Caco-2 (cell line): ENCODE measurements at regions of chr12 and their contacts with region 1.

Region 1: GRCh38 chr12:85468356-85469157 is 188.5 kb downstream of the ALX1 start:
- DNase-seq: peak; percentile 48 to 55
- H3K4me3 ChIP-seq: peak overlapping the region; percentile 11
- H3K4me3 Mint-ChIP-seq: peak overlapping the region; percentile 76
- H3K27ac Mint-ChIP-seq: peak overlapping the region; percentile 36
- H3K4me1 ChIP-seq: peaks cover 14% of the 10 kb centered on the region
- H3K4me1 Mint-ChIP-seq: peaks cover 19% of the 10 kb centered on the region
- H3K27me3 ChIP-seq: no peaks in the 10 kb centered on the region
- H3K27me3 Mint-ChIP-seq: no peaks in the 10 kb centered on the region
- CTCF ChIP-seq: peak; percentile 73 to 80

Region 2: GRCh38 chr12:85424581-85425348 is 43.8 kb before region 1 on chr12:
- CTCF ChIA-PET with region 1: interaction called, 6 read pairs
- POLR2A ChIA-PET with region 1: no interaction called
- intact Hi-C with region 1: loop called (anchors 1 kb)
- DNase-seq: peak; percentile 46 to 52
- H3K4me3 ChIP-seq: no peak overlapping the region
- H3K4me3 Mint-ChIP-seq: no peak overlapping the region
- H3K27ac Mint-ChIP-seq: no peak overlapping the region
- H3K4me1 ChIP-seq: peaks cover 29% of the 10 kb centered on the region
- H3K4me1 Mint-ChIP-seq: peaks cover 17% of the 10 kb centered on the region
- H3K27me3 ChIP-seq: no peaks in the 10 kb centered on the region
- H3K27me3 Mint-ChIP-seq: no peaks in the 10 kb centered on the region
- CTCF ChIP-seq: peak; percentile 59 to 72

Region 3: GRCh38 chr12:85642810-85643209 is 174.3 kb after region 1 on chr12:
- CTCF ChIA-PET with region 1: interaction called, 8 read pairs
- POLR2A ChIA-PET with region 1: no interaction called
- intact Hi-C with region 1: loop called (anchors 1 kb)
- DNase-seq: peak; percentile 47 to 68
- H3K4me3 ChIP-seq: no peak overlapping the region
- H3K4me3 Mint-ChIP-seq: no peak overlapping the region
- H3K27ac Mint-ChIP-seq: no peak overlapping the region
- H3K4me1 ChIP-seq: no peaks in the 10 kb centered on the region
- H3K4me1 Mint-ChIP-seq: no peaks in the 10 kb centered on the region
- H3K27me3 ChIP-seq: no peaks in the 10 kb centered on the region
- H3K27me3 Mint-ChIP-seq: no peaks in the 10 kb centered on the region
- CTCF ChIP-seq: peak; percentile 55 to 70

Region 4: DNA sequence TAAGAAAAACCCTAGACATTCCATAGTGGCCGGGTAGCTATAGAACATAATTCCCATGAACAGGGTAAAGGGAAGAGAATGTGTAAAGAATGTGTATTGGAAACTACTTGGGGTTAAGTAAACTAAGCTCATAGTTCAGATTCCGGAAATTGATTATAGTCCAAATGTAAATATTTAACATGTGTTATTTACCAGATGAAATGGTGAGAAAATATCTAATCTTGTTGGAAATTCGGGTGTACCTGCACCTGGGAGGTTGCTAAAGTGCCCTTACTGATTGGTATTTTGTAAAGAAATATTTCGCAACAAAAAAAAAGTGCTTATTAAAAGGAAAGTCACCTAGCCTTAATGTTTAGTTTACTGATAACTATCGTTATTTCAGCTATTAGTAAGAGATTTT is 353.2 kb after region 1 on chr12:
- CTCF ChIA-PET with region 1: no interaction called
- POLR2A ChIA-PET with region 1: no interaction called
- intact Hi-C with region 1: loop called (anchors 1 kb)
- DNase-seq: peak; percentile 45 to 64
- H3K4me3 ChIP-seq: no peak overlapping the region
- H3K4me3 Mint-ChIP-seq: no peak overlapping the region
- H3K27ac Mint-ChIP-seq: no peak overlapping the region
- H3K4me1 ChIP-seq: peaks cover 20% of the 10 kb centered on the region
- H3K4me1 Mint-ChIP-seq: peaks cover 7% of the 10 kb centered on the region
- H3K27me3 ChIP-seq: no peaks in the 10 kb centered on the region; the same call in 1 of the 2 replicates
- H3K27me3 Mint-ChIP-seq: peaks cover 9% of the 10 kb centered on the region
- CTCF ChIP-seq: no peak

Region 5: DNA sequence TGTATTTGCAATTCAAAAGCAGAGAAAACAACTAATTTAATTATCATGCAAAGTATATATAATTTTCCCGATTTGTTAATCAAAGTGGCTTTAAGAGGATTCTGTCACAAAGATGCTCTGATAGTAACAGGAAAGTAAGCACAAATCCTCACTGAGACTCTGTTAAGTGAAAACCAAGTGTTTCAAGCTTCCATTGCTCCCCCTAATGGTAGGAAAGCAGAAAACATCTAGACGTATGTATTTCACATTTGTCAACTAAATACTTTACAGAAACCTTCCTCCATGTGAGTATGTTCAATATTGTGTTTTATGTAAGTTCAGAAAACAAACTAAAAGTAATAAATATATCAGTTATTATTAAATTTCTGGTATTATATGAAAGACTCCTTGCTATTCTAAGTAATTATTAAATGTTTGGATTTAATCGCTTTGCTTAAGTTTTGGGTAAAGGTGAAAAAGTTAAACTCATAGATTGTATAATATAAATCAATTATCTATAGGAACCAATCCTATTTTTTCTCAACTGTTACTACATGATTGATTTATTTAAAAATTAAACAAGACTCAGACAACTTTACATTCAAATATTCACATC is 404.0 kb after region 1 on chr12:
- CTCF ChIA-PET with region 1: interaction called, 4 read pairs
- POLR2A ChIA-PET with region 1: no interaction called
- intact Hi-C with region 1: loop called (anchors 1 kb)
- DNase-seq: peak in 1 of 2 experiments; percentile 35
- H3K4me3 ChIP-seq: no peak overlapping the region
- H3K4me3 Mint-ChIP-seq: no peak overlapping the region
- H3K27ac Mint-ChIP-seq: no peak overlapping the region
- H3K4me1 ChIP-seq: no peaks in the 10 kb centered on the region
- H3K4me1 Mint-ChIP-seq: no peaks in the 10 kb centered on the region
- H3K27me3 ChIP-seq: no peaks in the 10 kb centered on the region
- H3K27me3 Mint-ChIP-seq: peaks cover 6% of the 10 kb centered on the region
- CTCF ChIP-seq: peak; percentile 72 to 73